Activated naive CD4-positive, alpha-beta T cell treated with anti-CD3 and anti-CD28 coated beads for 36 hours (primary cell): ENCODE measurements at regions of chr2 and their contacts with region 1.

Region 1: GRCh38 chr2:112821142-112821541 is 15.4 kb downstream of the IL1B start:
- DNase-seq: peak; percentile 39
- H3K4me3 Mint-ChIP-seq: no peak overlapping the region
- H3K27ac Mint-ChIP-seq: no peak overlapping the region
- H3K4me1 Mint-ChIP-seq: peaks cover 15% of the 10 kb centered on the region
- H3K27me3 Mint-ChIP-seq: no peaks in the 10 kb centered on the region

Region 2: DNA sequence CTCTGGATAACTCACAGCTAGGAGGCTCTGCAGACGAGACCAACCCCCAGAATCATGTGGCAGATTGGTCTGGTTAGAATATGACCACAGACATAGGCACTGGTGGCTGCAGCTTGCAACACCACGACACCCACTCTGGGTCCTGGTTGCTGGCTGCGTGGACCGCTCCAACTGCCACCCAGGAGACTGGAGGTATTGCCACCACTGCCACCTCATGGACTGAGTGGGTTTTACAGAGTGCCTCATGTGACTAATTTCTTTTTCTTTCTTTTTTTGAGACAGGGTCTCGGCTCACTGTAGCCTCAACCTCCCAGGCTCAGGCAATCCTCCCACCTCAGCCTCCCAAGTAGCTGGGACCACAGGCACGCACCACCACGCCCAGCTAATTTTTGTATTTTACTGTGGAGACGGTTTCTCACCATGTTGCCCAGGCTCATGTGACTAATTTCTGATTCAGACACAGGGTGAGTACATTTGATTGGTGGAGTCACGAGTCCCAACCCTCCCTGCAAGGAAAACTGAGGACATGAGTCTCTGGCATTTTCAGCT is 130.2 kb before region 1 on chr2:
- CTCF ChIA-PET with region 1: no interaction called
- intact Hi-C with region 1: no loop called
- DNase-seq: peak; percentile 79
- H3K4me3 Mint-ChIP-seq: peak overlapping the region; percentile 59
- H3K27ac Mint-ChIP-seq: no peak overlapping the region
- H3K4me1 Mint-ChIP-seq: peaks cover 35% of the 10 kb centered on the region
- H3K27me3 Mint-ChIP-seq: no peaks in the 10 kb centered on the region

Region 3: DNA sequence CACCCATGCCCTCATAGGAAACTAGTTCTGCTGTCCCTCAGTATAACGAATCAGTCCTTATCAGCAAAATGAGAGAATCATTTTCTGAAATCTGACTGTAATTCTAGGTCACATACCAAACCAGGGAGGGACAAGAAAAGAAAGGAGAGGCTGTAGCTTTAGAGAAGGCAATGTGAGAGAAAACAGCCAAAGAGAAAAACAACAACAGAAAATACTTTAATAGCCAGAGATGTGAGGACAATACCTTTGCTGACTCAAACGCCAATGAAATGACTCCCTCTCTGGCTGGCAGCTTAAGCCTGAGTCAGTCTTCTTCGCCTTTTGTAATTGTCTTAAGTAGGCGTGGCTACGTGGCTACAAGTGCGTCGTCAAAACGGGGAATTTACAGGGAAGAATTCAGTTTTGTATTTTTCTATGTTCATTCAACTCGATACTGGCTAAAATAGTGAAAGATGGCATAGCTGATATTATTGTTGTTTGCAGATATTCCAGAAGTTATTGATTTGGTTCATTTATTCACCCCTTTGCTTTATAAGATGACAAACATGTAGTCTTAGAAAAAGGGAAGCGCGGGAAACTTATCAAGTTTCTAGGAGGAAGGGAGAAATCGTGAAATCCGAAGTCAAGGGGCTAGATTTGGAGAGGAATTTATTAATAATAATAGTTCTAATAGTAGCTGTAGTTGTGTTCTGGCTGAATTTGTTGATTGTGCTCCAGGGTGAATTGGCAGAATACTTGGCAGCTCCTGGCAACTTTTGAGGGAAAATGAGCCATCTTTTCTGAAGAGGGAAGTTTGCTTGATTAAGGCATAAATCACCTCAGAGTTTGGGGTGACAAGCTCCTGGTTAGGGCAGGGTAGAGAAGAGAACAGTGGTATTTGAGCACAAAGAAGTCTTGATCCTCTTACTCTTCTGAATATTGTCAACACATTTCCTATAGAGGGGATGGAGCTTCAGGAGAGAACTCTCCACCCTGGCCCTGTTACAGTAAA is 36.6 kb before region 1 on chr2 and contains the start of gene IL1A:
- CTCF ChIA-PET with region 1: no interaction called
- intact Hi-C with region 1: loop called (anchors 5 kb)
- DNase-seq: peak; percentile 38
- H3K4me3 Mint-ChIP-seq: no peak within 1 kb of the TSS
- H3K27ac Mint-ChIP-seq: no peak within 1 kb of the TSS
- H3K4me1 Mint-ChIP-seq: peaks cover 3% of the 10 kb centered on the region
- H3K27me3 Mint-ChIP-seq: peaks cover 6% of the 10 kb centered on the region
- total RNA-seq, gene IL1A: 0.17 to 0.29 TPM